ENCODE measurements at regions of chr10 and their contacts with region 1.

Region 1: GRCh38 chr10:113678690-113679462 is 836 bp upstream of the CASP7 start:
- DNase-seq: no peak
- ATAC-seq: peak; percentile 34
- H3K4me3 ChIP-seq: peak overlapping the region; percentile 71
- H3K27ac ChIP-seq: peak overlapping the region; percentile 95
- H3K4me1 ChIP-seq: peaks cover 22% of the 10 kb centered on the region
- H3K27me3 ChIP-seq: no peaks in the 10 kb centered on the region
- CTCF ChIP-seq: peak; percentile 80 to 85 (median 81)
- EP300 ChIP-seq: no peak
- POLR2A ChIP-seq: no peak
- RAD21 ChIP-seq: peak; percentile 49; the same call in 1 of the 2 replicates

Region 2: GRCh38 chr10:113689057-113689456 is 10.2 kb after region 1 on chr10:
- CTCF ChIA-PET with region 1: interaction called, 15 read pairs
- POLR2A ChIA-PET with region 1: interaction called, 3 read pairs
- RAD21 ChIA-PET with region 1: interaction called, 3 read pairs
- SMC1A ChIA-PET with region 1: interaction called, 3 read pairs
- in situ Hi-C with region 1: no loop called
- intact Hi-C with region 1: no loop called
- DNase-seq: no peak
- ATAC-seq: peak; percentile 41; the same call in 1 of the 3 replicates
- H3K4me3 ChIP-seq: no peak overlapping the region
- H3K27ac ChIP-seq: no peak overlapping the region
- H3K4me1 ChIP-seq: peaks cover 3% of the 10 kb centered on the region
- H3K27me3 ChIP-seq: no peaks in the 10 kb centered on the region
- CTCF ChIP-seq: no peak
- EP300 ChIP-seq: no peak
- POLR2A ChIP-seq: no peak
- RAD21 ChIP-seq: no peak

Region 3: DNA sequence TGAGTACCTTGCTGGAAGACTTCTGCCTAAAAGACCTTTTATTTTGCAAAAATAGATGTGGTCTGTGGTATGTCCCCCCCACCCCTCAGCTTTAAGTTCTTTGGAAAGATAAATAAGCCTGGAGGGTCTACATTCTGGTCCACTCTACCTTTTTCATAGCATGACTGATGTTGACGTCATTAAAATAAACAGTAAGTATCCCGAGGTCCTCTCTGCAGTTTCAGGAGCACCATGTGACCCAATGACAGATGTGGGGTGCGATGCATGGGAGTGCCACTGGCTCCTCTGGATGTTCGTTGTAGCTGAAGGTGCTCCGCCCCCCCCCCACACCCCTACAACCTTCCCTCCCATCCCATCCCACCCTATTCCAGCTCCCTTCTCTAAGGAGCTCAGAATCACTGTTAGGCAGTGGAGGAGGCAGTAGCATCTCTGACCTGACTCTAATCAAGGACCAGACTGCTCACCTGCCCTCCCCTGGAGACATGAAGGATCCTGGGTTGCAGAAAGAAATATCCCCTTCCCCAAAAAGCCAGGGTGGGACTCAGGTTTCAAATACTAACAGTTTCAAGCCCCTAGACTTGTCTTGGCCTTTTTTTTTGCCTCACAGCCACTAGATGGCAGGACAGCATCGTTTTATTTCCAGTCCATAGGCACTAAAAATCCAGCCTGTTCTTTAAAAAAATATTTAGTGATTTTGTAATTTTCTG is 25.9 kb after region 1 on chr10:
- CTCF ChIA-PET with region 1: interaction called, 11 read pairs
- POLR2A ChIA-PET with region 1: interaction called, 3 read pairs
- RAD21 ChIA-PET with region 1: interaction called, 4 read pairs
- SMC1A ChIA-PET with region 1: interaction called, 3 read pairs
- in situ Hi-C with region 1: no loop called
- intact Hi-C with region 1: no loop called
- DNase-seq: no peak
- ATAC-seq: peak; percentile 86
- H3K4me3 ChIP-seq: no peak overlapping the region
- H3K27ac ChIP-seq: no peak overlapping the region
- H3K4me1 ChIP-seq: peaks cover 6% of the 10 kb centered on the region; the same call in 1 of the 2 replicates
- H3K27me3 ChIP-seq: no peaks in the 10 kb centered on the region
- CTCF ChIP-seq: peak; percentile 52 to 67 (median 66); a peak in 5 of 6 replicates
- EP300 ChIP-seq: no peak
- POLR2A ChIP-seq: no peak
- RAD21 ChIP-seq: peak; percentile 70

Region 4: DNA sequence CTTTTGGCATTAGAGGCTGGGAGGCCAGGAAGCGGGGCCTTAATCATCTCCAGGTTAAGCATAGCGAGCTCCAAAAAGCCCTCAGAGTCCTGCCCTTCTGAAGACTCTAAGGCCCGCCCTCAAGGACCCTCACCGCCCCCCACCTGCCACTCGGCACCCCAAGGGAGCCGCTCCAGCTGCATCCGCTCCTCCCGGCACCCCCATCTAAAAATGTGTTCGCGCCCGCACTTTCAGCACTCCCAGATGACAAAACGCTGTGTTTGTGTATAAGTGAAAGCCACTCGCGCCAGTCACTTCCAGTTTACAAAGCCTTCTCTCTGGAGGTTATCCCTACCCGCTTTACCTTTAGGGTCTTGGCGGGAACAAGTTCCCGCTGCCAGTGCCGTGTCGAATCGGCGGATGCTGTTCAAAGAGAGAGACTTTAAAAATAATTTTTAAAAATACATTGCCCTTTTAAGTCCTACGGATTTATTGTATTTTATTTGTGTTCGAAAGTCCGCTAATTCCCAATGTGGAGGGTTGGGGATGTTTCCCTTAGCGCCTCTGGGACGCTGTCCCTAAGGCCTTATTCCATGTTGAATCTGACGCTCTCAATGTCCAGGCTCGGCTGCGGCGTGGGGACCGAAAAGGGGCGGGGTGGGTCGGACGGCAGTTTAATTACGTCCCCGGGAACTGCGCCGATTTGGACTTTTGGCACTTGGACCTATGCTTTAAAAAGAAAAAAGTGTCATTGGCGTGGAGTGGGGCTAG is 175.3 kb after region 1 on chr10 and contains the starts of genes DCLRE1A and NHLRC2:
- CTCF ChIA-PET with region 1: interaction called, 3 read pairs
- POLR2A ChIA-PET with region 1: interaction called, 3 read pairs
- RAD21 ChIA-PET with region 1: interaction called, 4 read pairs
- SMC1A ChIA-PET with region 1: interaction called, 3 read pairs
- in situ Hi-C with region 1: no loop called
- intact Hi-C with region 1: loop called (anchors 5 kb)
- DNase-seq: no peak
- ATAC-seq: peak; percentile 55
- H3K4me3 ChIP-seq: peak within 1 kb of the TSS; percentile 78
- H3K27ac ChIP-seq: peak within 1 kb of the TSS; percentile 92
- H3K4me1 ChIP-seq: peaks cover 4% of the 10 kb centered on the region; the same call in 1 of the 2 replicates
- H3K27me3 ChIP-seq: no peaks in the 10 kb centered on the region
- CTCF ChIP-seq: no peak
- EP300 ChIP-seq: peak in 1 of 2 experiments; percentile 99; a peak in 2 of 4 replicates
- POLR2A ChIP-seq: no peak
- RAD21 ChIP-seq: no peak
- polyA plus RNA-seq, gene DCLRE1A: 4.8 to 5.2 TPM
- polyA plus RNA-seq, gene NHLRC2: 1.9 to 3.9 TPM

Region 5: DNA sequence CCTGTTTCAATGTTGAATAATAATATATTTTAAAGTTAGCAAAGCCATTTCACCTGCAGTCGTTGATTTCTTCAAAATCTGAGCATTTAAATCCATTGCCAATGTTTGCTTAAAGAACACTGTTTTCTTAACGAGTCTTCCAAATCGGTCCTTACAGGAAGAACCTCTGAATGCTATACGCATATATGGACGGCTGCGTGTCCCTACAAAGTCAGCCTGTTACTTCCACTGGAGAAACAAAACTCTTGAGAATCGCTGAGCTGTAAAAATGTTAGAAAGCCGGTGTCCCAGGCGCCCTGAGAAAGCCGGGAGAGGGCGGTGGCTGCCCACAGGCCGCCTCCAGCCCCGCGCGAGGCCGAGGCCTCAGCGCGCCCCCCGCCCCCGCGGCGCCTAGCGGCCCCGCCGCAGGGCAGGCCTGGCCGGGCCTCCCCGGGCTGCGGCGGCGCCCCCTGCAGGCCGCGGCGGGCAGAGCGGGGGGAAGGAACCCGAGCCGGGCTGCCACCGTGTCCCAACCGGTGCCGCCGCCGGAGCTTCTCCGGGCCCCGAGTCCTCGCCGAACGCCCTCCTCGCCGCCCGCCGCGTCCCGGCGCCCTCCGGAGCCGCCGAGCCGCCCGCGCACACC is 1142.5 kb after region 1 on chr10 and contains the start of gene FHIP2A:
- CTCF ChIA-PET with region 1: no interaction called
- POLR2A ChIA-PET with region 1: no interaction called
- RAD21 ChIA-PET with region 1: no interaction called
- SMC1A ChIA-PET with region 1: no interaction called
- in situ Hi-C with region 1: loop called (anchors 25 kb)
- intact Hi-C with region 1: no loop called
- DNase-seq: no peak
- ATAC-seq: peak; percentile 84
- H3K4me3 ChIP-seq: peak within 1 kb of the TSS; percentile 75
- H3K27ac ChIP-seq: peak within 1 kb of the TSS; percentile 80
- H3K4me1 ChIP-seq: peaks cover 16% of the 10 kb centered on the region
- H3K27me3 ChIP-seq: no peaks in the 10 kb centered on the region
- CTCF ChIP-seq: peak; percentile 30 to 59 (median 51); a peak in 3 of 6 replicates
- EP300 ChIP-seq: no peak
- POLR2A ChIP-seq: peak; percentile 73
- RAD21 ChIP-seq: peak; percentile 58
- polyA plus RNA-seq, gene FHIP2A: 6.8 to 9.2 TPM

Measured in GM12878 (cell line).